ENCODE measurements at regions of chr6 and their contacts with region 1.

Region 1: DNA sequence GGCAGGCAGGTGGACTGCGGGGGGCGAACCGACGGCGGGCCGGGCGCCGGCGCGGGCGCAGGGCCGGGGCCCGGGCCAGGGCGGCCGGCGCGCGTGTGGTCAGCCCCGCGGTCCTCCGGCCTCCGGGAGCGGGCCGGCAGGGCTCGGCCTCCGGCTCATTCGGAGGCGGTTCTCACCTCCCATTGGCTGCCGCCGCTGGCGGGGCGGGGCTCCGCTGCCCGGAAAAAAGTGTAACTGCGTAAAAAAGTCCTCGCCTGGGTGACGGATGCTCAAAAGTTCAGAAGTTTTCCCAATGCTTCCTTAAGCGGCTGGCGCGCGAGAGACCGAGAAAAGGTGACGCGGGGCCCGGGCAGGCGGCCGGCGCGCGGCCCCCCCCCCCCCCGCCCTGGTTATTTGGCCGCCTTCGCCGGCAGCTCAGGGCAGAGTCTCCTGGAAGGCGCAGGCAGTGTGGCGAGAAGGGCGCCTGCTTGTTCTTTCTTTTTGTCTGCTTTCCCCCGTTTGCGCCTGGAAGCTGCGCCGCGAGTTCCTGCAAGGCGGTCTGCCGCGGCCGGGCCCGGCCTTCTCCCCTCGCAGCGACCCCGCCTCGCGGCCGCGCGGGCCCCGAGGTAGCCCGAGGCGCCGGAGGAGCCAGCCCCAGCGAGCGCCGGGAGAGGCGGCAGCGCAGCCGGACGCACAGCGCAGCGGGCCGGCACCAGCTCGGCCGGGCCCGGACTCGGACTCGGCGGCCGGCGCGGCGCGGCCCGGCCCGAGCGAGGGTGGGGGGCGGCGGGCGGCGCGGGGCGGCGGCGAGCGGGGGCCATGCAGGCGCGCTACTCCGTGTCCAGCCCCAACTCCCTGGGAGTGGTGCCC is at the start of gene FOXC1:
- DNase-seq: peak; percentile 97
- ATAC-seq: peak; percentile 80
- H3K4me3 ChIP-seq: peak within 1 kb of the TSS; percentile 80
- H3K27ac ChIP-seq: peak within 1 kb of the TSS; percentile 59
- H3K4me1 ChIP-seq: peaks cover 4% of the 10 kb centered on the region; the same call in 1 of the 2 replicates
- H3K27me3 ChIP-seq: no peaks in the 10 kb centered on the region
- CTCF ChIP-seq: no peak
- total RNA-seq, gene FOXC1: 7.3 and 12.0 TPM in 2 replicates

Region 2: DNA sequence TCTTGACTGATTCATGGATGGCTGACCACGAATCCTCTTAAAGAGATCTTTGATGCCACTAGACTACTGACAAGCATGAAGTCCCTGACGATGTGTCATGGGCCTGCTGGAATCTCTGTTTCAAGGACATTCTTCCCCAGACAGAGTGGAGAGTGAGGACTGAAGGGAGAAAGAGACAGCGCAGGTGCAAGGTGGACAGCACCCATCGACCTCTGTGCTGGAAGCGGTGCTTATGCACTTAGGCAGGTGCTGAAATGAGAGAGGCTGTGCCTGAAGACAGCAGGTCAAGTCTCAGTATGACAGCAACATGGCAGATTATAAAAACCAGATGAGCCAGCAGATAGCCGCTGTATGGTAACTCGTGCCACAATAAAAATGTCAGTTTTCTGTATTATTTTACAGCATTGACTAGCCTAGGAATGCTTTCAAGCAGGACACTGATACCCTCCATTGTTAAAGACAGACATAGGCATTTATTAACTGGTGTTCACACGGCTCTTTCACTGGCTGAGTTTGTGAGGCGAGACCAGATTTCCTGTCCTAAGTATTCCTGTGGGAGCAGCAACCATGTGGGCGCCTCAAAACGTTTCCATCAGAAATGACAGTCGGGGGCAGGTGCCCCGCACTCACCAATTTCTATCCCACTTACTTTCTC is 47.4 kb after region 1 on chr6:
- CTCF ChIA-PET with region 1: no interaction called
- POLR2A ChIA-PET with region 1: no interaction called
- intact Hi-C with region 1: no loop called
- DNase-seq: no peak
- ATAC-seq: no peak
- H3K4me3 ChIP-seq: no peak overlapping the region
- H3K27ac ChIP-seq: no peak overlapping the region
- H3K4me1 ChIP-seq: no peaks in the 10 kb centered on the region
- H3K27me3 ChIP-seq: no peaks in the 10 kb centered on the region
- CTCF ChIP-seq: no peak

Region 3: GRCh38 chr6:1679031-1679686 is 69.3 kb after region 1 on chr6:
- CTCF ChIA-PET with region 1: no interaction called
- POLR2A ChIA-PET with region 1: no interaction called
- intact Hi-C with region 1: loop called (anchors 2 kb)
- DNase-seq: no peak
- ATAC-seq: peak; percentile 39; the same call in 1 of the 2 replicates
- H3K4me3 ChIP-seq: no peak overlapping the region
- H3K27ac ChIP-seq: peak overlapping the region; percentile 47
- H3K4me1 ChIP-seq: peaks cover 20% of the 10 kb centered on the region
- H3K27me3 ChIP-seq: no peaks in the 10 kb centered on the region
- CTCF ChIP-seq: no peak

Region 4: DNA sequence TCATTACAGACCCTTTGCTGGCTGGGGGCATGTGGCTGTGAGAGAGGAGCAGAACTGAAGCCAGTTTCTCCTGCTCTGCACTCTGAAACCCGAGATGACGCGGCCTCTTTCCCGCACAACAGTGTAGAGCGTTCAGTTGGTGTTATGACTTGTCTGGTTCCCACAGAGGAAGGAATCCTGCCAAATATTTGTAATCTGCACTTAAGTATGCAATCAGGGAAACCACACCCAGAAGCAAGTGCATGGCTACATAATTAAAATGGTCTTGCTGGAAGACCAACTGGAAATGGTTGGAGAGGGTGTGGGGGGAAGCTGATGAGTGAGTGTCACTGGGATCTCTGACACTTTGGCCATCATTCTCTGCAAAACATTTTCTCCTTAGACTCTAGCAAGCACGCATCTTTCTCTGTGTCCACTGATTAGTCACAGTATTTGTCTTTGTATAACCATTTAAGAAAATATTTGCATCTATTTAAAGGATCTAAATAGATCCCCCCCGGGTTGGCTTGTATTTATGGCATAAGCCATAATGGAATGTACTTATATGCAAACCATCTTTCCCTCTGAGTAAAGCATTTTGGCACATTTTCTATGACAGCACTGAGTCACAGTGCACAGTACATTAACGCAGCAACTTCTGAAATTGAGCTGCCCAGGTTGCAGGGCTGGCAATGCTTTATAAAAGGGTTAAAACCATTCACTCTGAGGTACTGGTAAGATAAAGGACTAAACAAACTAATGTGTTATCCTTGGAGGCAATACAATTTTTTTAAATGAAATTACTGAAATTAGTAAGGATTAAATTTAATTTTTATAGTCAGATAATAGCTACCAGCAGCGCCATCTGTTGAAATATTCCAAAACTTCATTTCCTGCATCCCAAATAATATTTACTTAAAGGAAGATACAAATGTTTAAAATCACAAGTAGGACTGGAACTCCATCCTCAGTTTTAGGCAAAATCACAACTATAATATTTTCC is 76.5 kb after region 1 on chr6:
- CTCF ChIA-PET with region 1: interaction called, 15 read pairs
- POLR2A ChIA-PET with region 1: interaction called, 6 read pairs
- intact Hi-C with region 1: loop called (anchors 1 kb)
- DNase-seq: peak; percentile 94
- ATAC-seq: peak; percentile 78
- H3K4me3 ChIP-seq: peak overlapping the region; percentile 34; the same call in 1 of the 2 replicates
- H3K27ac ChIP-seq: peak overlapping the region; percentile 92
- H3K4me1 ChIP-seq: peaks cover 55% of the 10 kb centered on the region
- H3K27me3 ChIP-seq: no peaks in the 10 kb centered on the region
- CTCF ChIP-seq: peak; percentile 74

Region 5: GRCh38 chr6:1767481-1768251 is 157.8 kb after region 1 on chr6:
- CTCF ChIA-PET with region 1: no interaction called
- POLR2A ChIA-PET with region 1: no interaction called
- intact Hi-C with region 1: loop called (anchors 1 kb)
- DNase-seq: peak; percentile 68
- ATAC-seq: peak; percentile 70
- H3K4me3 ChIP-seq: peak overlapping the region; percentile 52
- H3K27ac ChIP-seq: peak overlapping the region; percentile 85
- H3K4me1 ChIP-seq: peaks cover 63% of the 10 kb centered on the region
- H3K27me3 ChIP-seq: no peaks in the 10 kb centered on the region
- CTCF ChIP-seq: no peak

Region 6: DNA sequence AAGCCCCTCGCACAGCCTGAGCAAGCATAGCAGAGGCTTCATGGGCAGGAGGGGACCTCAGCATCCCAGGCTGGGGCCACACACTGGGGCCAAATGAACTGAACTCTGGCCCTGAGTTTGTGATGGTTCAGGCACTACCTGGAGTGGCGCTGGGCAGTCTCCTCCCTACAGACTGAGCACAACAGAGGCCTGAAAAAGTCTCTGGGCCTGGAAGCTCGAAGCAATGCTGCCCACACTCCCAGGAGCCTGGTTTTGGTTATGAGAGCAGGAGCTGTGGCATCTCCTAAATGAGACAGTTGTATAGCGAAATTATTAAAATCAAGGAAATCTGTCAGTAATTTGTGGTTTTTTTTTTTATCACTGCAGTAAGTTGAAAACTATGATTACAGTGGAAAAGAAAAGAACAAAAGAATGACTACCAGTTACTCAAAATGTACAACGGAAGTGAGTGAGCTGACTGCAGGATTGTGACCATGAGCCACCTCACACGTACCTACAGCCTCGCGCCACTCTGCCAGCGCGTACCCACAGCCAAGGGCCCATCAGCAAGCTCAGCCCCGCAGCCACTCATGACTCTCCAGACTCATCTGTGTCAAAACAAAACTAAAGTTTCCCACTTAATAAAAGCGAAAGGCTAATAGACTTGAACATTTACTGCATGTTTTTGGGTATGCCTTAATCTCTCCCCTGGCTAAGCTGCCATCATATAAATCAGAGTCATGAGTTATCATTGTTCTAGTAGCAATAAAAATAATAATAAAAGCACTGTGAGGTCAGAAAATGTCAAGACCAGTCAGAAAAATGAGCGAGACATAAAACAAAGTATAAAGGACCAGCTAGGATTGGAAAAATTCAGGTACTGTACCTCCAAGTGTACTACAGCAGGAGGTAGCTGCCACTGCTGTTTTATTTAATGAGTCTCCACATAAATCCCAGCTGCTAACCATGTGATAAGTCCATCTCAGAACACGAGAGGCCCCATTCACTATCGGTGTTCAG is 176.9 kb after region 1 on chr6:
- CTCF ChIA-PET with region 1: interaction called, 13 read pairs
- POLR2A ChIA-PET with region 1: no interaction called
- intact Hi-C with region 1: no loop called
- DNase-seq: no peak
- ATAC-seq: peak; percentile 45; the same call in 1 of the 2 replicates
- H3K4me3 ChIP-seq: no peak overlapping the region
- H3K27ac ChIP-seq: no peak overlapping the region
- H3K4me1 ChIP-seq: no peaks in the 10 kb centered on the region
- H3K27me3 ChIP-seq: no peaks in the 10 kb centered on the region
- CTCF ChIP-seq: no peak

Region 7: GRCh38 chr6:1838604-1839213 is 228.8 kb after region 1 on chr6:
- CTCF ChIA-PET with region 1: no interaction called
- POLR2A ChIA-PET with region 1: no interaction called
- intact Hi-C with region 1: loop called (anchors 2 kb)
- DNase-seq: peak; percentile 68
- ATAC-seq: peak; percentile 56
- H3K4me3 ChIP-seq: no peak overlapping the region
- H3K27ac ChIP-seq: no peak overlapping the region; the same call in 1 of the 2 replicates
- H3K4me1 ChIP-seq: peaks cover 42% of the 10 kb centered on the region
- H3K27me3 ChIP-seq: no peaks in the 10 kb centered on the region
- CTCF ChIP-seq: no peak

Region 8: DNA sequence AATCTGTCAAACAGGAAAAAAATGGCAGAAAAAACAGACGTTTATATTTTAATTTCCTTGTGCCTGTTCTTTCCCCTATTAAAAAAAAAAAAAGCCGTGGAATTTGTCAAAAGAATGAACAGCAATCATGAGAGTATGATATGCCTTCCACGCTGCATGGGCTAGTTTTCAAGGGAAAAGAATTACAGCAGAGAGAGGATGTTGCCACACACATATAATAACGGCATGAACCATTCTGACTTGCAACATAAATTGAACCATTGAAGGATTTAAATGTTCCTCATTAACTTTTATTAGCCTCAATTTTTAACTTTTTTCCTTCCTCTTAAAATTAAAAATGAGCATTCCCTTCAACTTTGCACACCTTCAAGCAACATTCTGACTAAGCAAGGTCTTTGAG is 301.6 kb after region 1 on chr6:
- CTCF ChIA-PET with region 1: no interaction called
- POLR2A ChIA-PET with region 1: no interaction called
- intact Hi-C with region 1: loop called (anchors 5 kb)
- DNase-seq: no peak
- ATAC-seq: no peak
- H3K4me3 ChIP-seq: no peak overlapping the region
- H3K27ac ChIP-seq: no peak overlapping the region
- H3K4me1 ChIP-seq: peaks cover 30% of the 10 kb centered on the region
- H3K27me3 ChIP-seq: no peaks in the 10 kb centered on the region
- CTCF ChIP-seq: no peak